ENCODE measurements at regions of chr5 and their contacts with region 1.

Region 1: GRCh38 chr5:59790399-59791125 is 103.0 kb downstream of the PDE4D start:
- DNase-seq: no peak
- H3K4me3 Mint-ChIP-seq: peak overlapping the region; percentile 40
- H3K27ac Mint-ChIP-seq: peak overlapping the region; percentile 68
- H3K4me1 Mint-ChIP-seq: peaks cover 20% of the 10 kb centered on the region
- H3K27me3 Mint-ChIP-seq: peaks cover 24% of the 10 kb centered on the region

Region 2: DNA sequence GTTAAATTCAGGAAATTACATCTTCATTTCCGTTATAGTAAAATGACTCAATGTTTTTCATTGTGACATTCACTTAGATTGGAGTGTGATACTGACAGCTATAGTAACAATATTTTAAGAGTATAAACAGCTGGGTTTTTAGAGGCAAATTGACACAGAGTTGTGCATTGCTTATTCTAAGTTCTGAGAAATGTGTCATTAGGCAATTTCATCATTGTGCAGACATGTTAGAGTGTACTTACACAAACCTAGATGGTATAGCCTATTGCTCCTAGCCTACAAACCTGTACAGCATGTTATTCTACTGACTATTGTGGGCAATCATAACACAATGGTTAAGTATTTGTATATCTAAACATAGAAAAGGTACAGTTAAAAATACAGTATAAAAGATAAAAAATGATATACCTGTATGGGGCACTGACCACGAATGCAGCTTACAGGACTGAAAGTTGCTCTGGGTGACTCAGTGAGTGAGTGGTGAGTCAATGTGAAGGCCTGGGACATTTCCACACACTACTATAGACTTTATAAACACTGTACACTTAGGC is 29.7 kb before region 1 on chr5:
- CTCF ChIA-PET with region 1: interaction called, 3 read pairs
- intact Hi-C with region 1: loop called (anchors 1 kb)
- DNase-seq: peak; percentile 49
- H3K4me3 Mint-ChIP-seq: no peak overlapping the region
- H3K27ac Mint-ChIP-seq: no peak overlapping the region
- H3K4me1 Mint-ChIP-seq: peaks cover 6% of the 10 kb centered on the region
- H3K27me3 Mint-ChIP-seq: peaks cover 6% of the 10 kb centered on the region

Region 3: DNA sequence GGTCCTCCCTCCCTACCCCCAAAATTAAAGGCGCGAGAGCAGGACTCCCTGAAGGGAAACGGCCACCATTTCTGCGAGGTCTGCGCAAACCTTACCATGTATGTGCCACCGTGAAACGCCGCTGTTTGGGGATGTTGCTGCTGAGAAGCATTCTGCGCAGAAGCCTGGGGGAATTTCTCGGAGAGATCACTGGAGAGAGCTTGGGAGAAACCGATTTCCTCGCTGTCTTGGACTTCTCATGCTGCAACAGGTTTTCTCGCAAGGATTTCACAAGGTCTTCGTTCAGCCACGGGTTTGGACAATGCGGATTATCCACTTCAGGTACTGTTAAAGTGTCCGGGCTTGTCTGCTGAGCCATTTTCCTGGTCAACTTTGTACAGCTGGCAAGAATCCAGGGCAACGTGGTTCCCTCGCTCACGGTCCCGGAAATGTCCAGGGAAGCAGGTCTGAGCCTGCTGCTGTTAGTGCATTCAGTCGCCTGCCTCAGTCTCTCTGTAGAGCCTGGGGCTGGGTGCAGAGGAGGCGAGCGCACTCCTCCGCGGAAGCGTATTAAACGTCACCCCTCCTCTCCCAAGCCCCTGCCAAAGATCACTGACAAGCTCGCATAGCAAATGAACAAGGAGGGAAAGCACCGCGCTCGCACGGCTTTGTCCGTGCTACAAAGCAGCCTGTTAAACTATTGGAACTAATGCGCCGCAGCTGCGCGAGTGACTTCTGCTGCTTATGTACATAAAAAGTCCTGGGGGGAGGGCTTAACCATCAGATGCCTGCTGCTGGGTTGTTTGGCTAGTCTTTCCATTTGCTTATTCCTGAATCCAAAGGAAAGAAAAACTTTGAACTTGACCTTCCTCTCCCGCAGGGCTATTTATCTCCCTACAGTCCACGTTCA is 22.2 kb before region 1 on chr5:
- CTCF ChIA-PET with region 1: interaction called, 6 read pairs
- intact Hi-C with region 1: loop called (anchors 1 kb)
- DNase-seq: peak; percentile 56
- H3K4me3 Mint-ChIP-seq: peak overlapping the region; percentile 65
- H3K27ac Mint-ChIP-seq: peak overlapping the region; percentile 28
- H3K4me1 Mint-ChIP-seq: peaks cover 16% of the 10 kb centered on the region
- H3K27me3 Mint-ChIP-seq: peaks cover 24% of the 10 kb centered on the region

Measured in activated naive CD4-positive, alpha-beta T cell treated with anti-CD3 and anti-CD28 coated beads for 36 hours (primary cell).